PC-9 (cell line): ENCODE measurements at regions of chr11 and their contacts with region 1.

Region 1: DNA sequence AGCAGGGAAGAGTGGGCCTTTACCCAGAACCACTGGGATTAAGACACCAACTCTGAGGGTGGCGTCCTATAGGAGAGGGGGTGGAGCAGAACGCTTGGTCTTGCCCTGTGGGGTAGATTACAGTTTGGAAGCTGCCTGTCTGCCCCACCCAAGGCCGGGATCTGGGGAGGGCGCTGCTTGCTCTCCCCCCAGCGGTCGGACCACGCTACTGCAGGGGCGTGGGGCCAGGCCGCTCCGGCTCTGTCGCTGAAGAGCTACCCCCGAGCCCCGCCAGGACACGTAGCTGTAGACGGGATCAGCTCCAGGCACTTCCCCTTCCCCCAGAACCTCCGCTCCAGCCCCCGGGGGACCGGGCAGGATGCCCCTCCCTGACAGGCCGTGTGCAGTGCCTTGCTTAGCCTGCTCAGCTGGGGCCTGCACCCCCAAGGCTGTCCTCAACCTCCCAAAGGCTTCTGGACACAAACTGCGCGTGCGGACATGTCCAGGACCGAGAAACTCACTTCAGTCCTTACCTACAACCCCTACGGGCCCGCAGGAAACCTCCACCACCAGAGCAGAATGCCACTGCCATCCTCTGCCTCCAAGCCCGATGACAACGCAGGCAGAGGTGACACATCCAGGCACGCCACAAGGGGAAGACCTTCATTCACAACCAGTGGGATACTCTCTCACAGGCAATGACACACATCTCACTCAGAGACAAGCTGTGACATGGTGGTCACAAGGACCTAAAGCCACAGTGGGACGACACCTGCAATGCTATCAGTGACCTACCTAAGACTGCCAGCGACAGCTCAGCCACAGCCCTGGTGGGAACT is 3.6 kb downstream of the AHNAK start:
- DNase-seq: peak; percentile 76 to 90
- H3K4me3 ChIP-seq: peak overlapping the region; percentile 98
- H3K27ac ChIP-seq: peak overlapping the region; percentile 72
- H3K4me1 ChIP-seq: peaks cover 78% of the 10 kb centered on the region
- H3K27me3 ChIP-seq: no peaks in the 10 kb centered on the region
- CTCF ChIP-seq: peak; percentile 100

Region 2: DNA sequence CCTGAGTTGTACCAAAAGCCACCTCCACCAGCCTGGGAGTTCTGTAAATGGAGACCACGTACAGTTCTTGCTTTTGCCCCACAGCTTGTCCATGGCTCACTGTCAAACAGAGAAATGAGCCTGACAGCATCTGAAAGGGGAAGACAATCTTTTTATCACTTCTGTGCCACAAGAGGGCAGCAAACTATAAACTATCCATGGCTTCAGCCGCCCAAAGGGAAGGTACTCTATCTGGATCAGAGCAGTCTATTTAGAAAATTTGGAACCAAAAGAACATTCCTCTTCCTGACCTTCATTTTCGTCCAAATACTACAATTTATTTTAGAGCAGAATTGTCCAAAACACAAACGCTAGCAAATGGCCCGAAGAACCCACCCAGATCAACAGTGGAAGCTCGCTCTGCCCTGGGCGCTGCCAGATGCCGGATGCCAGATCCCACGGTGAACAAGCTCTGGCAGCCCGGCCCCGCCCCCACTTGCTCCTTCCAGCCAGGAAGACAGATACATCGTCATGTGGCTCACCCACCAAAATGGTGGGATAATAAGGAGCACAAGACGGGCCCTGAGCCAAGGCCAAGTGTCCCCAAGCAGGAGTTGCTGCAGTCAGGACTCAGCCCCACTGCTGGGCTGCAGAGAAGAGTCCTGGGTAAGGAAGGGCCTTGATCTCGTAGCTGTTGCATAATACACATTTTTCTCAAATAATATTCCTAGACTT is 148.0 kb before region 1 on chr11:
- CTCF ChIA-PET with region 1: interaction called, 20 read pairs
- POLR2A ChIA-PET with region 1: interaction called, 3 read pairs
- intact Hi-C with region 1: loop called (anchors 1 kb)
- DNase-seq: peak; percentile 71 to 75
- H3K4me3 ChIP-seq: no peak overlapping the region
- H3K27ac ChIP-seq: no peak overlapping the region
- H3K4me1 ChIP-seq: peaks cover 27% of the 10 kb centered on the region
- H3K27me3 ChIP-seq: no peaks in the 10 kb centered on the region
- CTCF ChIP-seq: peak; percentile 91

Region 3: DNA sequence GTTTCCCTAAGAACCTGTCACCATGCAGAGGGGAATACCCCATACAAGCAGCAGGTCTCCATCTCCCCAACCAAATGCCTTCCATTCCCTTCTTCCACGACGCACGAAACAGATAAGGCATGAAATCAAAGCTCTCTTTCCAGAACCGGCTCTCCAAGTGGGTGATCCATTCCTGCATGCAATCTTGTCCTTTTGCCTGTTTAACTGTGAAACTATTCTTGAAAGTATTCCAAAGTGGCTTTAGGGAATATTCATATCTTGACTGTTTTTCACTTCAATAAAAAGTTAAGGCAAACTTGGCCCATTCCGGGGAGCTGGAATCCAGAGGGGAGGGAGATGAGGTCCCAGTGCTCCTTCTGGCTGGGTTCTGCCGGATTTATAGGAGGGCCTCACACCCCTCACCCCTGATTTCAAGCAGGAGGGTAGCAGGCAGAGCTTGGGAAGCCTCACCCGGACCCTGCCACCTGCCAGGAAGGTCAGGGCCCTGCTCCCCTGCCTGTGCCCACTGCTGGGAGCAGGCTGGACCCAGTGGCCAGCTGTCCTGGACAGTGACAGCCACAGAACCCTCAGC is 63.2 kb before region 1 on chr11:
- CTCF ChIA-PET with region 1: interaction called, 6 read pairs
- POLR2A ChIA-PET with region 1: interaction called, 26 read pairs
- intact Hi-C with region 1: loop called (anchors 1 kb)
- DNase-seq: no peak
- H3K4me3 ChIP-seq: peak overlapping the region; percentile 36; the same call in 1 of the 2 replicates
- H3K27ac ChIP-seq: peak overlapping the region; percentile 95
- H3K4me1 ChIP-seq: peaks cover 42% of the 10 kb centered on the region
- H3K27me3 ChIP-seq: no peaks in the 10 kb centered on the region
- CTCF ChIP-seq: no peak

Region 4: GRCh38 chr11:62508268-62509058 is 34.5 kb before region 1 on chr11:
- CTCF ChIA-PET with region 1: interaction called, 15 read pairs
- POLR2A ChIA-PET with region 1: interaction called, 9 read pairs
- intact Hi-C with region 1: loop called (anchors 1 kb)
- DNase-seq: peak; percentile 86 to 92
- H3K4me3 ChIP-seq: peak overlapping the region; percentile 19; the same call in 1 of the 2 replicates
- H3K27ac ChIP-seq: peak overlapping the region; percentile 63
- H3K4me1 ChIP-seq: peaks cover 46% of the 10 kb centered on the region
- H3K27me3 ChIP-seq: no peaks in the 10 kb centered on the region
- CTCF ChIP-seq: peak; percentile 57; the same call in 1 of the 2 replicates

Region 5: DNA sequence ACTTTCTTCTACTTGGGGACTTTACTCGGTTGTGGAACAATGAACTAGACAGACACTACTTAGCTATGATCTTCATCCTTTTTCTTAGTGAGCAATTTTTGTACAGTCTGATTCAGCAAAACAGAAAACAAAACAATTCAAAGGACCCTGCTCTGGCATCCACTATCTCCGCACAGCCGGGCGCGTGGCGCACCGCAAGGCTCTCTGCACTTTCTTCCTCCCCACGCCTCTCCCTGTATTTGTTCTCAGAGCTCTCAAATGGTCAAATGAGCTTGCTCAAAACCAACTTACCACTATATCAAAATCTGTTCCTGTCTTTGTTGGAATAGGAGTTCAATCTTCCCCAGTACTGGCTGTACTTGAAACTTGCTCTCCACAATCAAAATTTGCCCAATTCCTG is 23.3 kb after region 1 on chr11:
- CTCF ChIA-PET with region 1: interaction called, 49 read pairs
- POLR2A ChIA-PET with region 1: interaction called, 36 read pairs
- intact Hi-C with region 1: no loop called
- DNase-seq: no peak
- H3K4me3 ChIP-seq: no peak overlapping the region
- H3K27ac ChIP-seq: peak overlapping the region; percentile 36; the same call in 1 of the 2 replicates
- H3K4me1 ChIP-seq: peaks cover 48% of the 10 kb centered on the region
- H3K27me3 ChIP-seq: no peaks in the 10 kb centered on the region
- CTCF ChIP-seq: no peak

Region 6: GRCh38 chr11:62880803-62881578 is 338.0 kb after region 1 on chr11 and contains the start of gene SLC3A2:
- CTCF ChIA-PET with region 1: no interaction called
- POLR2A ChIA-PET with region 1: interaction called, 3 read pairs
- intact Hi-C with region 1: loop called (anchors 2 kb)
- DNase-seq: peak; percentile 85 to 90
- H3K4me3 ChIP-seq: peak within 1 kb of the TSS; percentile 69
- H3K27ac ChIP-seq: peak within 1 kb of the TSS; percentile 96
- H3K4me1 ChIP-seq: peaks cover 48% of the 10 kb centered on the region
- H3K27me3 ChIP-seq: no peaks in the 10 kb centered on the region
- CTCF ChIP-seq: peak; percentile 68
- total RNA-seq, gene SLC3A2: 513 and 619 TPM in 2 replicates